ENCODE measurements at regions of chr1 and their contacts with region 1.

Region 1: GRCh38 chr1:47710329-47711071 is 272.7 kb downstream of the FOXD2 start:
- ATAC-seq: peak; percentile 69 to 83 (median 75)
- H3K4me3 ChIP-seq: no peak overlapping the region
- H3K27ac ChIP-seq: no peak overlapping the region
- H3K4me1 ChIP-seq: peaks cover 9 to 11% of the 10 kb centered on the region in 2 donors

Region 2: GRCh38 chr1:47179017-47179987 is 531.2 kb before region 1 on chr1:
- in situ Hi-C with region 1: loop called in 5 of 9 experiments (anchors 25 kb)
- ATAC-seq: peak; percentile 79 to 95 (median 88)
- H3K4me3 ChIP-seq: peak overlapping the region; percentile 3 to 30 (median 17)
- H3K27ac ChIP-seq: no peak overlapping the region
- H3K4me1 ChIP-seq: no peaks in the 10 kb centered on the region

Region 3: GRCh38 chr1:47432071-47433036 is 278.1 kb before region 1 on chr1:
- in situ Hi-C with region 1: loop called in 7 of 9 experiments (anchors 5 to 10 kb)
- ATAC-seq: peak; percentile 69 to 89 (median 82)
- H3K4me3 ChIP-seq: no peak overlapping the region
- H3K27ac ChIP-seq: no peak overlapping the region
- H3K4me1 ChIP-seq: peaks cover 2 to 18% of the 10 kb centered on the region in 2 donors

Region 4: DNA sequence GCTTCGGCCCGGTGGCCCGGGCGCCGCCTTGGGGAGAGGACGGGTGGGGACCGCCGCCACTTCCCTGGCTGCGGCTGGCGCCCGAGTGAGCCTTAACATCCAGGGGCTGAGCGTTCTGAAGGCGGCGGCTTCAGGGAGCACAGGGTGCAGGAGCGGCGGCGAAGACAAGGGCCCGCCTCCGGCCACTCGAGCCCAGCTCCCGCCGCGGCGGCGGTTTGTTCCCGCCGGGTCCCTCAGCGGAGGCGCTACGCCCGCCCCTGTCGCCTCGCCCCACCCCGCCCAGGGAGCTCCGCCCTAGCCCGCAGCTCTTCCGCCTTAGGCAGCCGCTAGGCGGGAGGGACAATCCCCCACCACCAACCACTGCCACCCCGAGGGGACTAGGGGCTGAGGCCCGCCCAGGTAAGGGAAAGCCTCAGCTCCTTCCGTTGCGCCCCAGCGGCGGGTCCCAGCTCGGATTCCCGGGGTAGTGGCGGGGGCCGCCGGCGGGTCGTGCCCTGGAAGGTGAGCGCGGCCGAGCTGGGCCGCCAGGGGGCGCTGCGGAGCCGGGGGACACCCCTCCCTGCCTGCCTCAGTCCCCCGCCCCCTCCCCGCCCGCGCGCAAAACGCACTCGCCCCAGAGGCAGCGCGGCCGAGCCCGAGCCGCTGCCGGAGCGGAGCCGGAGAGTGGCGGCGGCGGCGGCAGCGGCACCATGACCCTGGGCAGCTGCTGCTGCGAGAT is 272.9 kb before region 1 on chr1 and contains the start of gene FOXD2:
- in situ Hi-C with region 1: loop called in 8 of 9 experiments (anchors 5 to 10 kb)
- ATAC-seq: peak; percentile 74 to 90 (median 86)
- H3K4me3 ChIP-seq: peak within 1 kb of the TSS; percentile 21 to 61 (median 47)
- H3K27ac ChIP-seq: no peak within 1 kb of the TSS
- H3K4me1 ChIP-seq: peaks cover 2 to 17% of the 10 kb centered on the region in 2 donors
- total RNA-seq, gene FOXD2: 0.05 to 1.6 (median 0.30) TPM in 6 of 8 experiments, not detected in the others

Region 5: GRCh38 chr1:47449822-47450552 is 260.5 kb before region 1 on chr1:
- in situ Hi-C with region 1: loop called in 1 of 9 experiments (anchors 10 kb)
- ATAC-seq: peak in 6 of 8 experiments; percentile 22 to 92 (median 60)
- H3K4me3 ChIP-seq: no peak overlapping the region
- H3K27ac ChIP-seq: no peak overlapping the region
- H3K4me1 ChIP-seq: peaks cover 0 to 3% of the 10 kb centered on the region in 2 donors

Region 6: DNA sequence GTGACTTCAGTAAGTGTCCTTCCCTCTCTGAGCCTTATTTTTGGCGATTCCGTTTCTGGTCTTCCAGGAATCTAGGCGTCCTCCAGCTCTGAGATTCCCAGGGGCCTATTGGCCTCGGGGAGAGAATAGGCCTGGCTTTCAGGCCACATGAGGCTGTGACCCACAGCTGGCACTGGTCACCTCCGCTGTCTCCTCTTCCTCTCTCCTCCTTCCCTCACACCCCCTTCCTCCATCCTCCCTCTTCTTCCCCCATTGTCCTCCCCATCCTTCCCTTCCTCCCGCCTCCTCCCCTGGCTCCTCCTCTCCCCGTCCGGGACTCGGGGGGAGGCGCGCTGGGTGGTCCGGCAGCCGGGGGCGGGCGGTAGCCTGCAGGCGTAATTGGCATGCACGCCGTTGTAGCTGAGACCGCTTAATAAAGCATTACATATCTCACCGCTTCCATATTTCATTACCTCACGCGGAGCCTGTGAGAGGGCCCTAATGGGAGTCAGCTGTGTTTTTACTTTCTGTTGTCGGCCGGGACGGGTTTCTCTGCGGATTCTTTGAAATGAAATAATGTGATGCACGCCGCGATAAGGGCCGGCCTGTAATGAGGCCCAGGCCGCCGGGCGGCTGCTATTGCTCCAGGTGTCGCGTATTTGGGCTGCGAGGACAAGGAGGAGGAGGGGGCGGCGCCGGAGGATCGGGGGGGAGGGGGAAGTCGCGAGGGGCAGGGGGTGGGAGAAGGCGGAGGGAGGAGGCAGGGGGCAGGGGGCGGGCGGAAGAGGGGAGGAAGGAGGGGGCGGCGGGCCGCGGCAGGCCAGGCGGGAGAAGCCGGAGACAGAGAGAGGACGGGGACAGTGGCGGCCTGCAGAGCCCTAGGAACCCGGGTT is 177.3 kb before region 1 on chr1:
- in situ Hi-C with region 1: loop called in 1 of 9 experiments (anchors 25 kb)
- ATAC-seq: peak; percentile 85 to 96 (median 91)
- H3K4me3 ChIP-seq: peak overlapping the region; percentile 16 to 32 (median 24)
- H3K27ac ChIP-seq: peak overlapping the region; percentile 9 to 65
- H3K4me1 ChIP-seq: peaks cover 31 to 33% of the 10 kb centered on the region in 2 donors

Measured in motor neuron (in vitro differentiated cells).